ENCODE measurements at regions of chr9 and their contacts with region 1.

Region 1: DNA sequence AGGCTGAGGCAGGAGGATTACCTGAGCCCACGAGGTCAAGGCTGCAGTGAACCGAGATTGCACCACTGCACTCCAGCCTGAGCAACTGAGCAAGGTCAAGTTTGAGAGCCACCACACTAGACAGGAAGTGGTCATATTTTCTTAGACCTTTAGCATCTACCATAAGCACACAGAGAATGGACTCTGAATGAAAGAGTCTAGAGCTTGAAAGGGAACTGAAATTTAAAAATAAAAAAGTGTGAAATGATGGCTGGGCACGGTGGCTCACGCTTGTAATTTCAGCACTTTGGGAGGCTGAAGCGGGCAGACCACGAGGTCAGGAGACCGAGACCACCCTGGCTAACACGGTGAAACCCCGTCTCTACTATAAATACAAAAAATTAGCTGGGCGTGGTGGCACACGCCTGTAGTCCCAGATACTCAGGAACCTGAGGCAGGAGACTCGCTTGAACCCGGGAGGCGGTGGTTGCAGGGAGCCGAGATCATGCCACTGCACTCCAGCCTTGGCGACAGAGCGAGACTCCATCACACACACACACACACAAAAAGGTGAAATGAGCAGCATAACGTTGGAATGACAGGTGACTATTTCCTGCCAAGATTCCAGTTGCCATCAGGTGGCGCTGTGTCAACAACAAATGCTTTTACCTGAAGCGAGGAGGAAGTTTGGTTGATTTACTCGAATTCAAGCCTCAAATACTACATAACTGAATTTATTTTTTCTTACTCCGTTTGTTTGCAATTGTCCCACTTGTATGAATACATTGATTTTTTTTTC is 21.3 kb upstream of the AK3 start:
- DNase-seq: peak; percentile 90
- ATAC-seq: peak; percentile 86
- H3K4me3 Mint-ChIP-seq: peak overlapping the region; percentile 43
- H3K27ac Mint-ChIP-seq: peak overlapping the region; percentile 55
- H3K4me1 Mint-ChIP-seq: peaks cover 15% of the 10 kb centered on the region
- H3K27me3 Mint-ChIP-seq: peaks cover 7% of the 10 kb centered on the region

Region 2: DNA sequence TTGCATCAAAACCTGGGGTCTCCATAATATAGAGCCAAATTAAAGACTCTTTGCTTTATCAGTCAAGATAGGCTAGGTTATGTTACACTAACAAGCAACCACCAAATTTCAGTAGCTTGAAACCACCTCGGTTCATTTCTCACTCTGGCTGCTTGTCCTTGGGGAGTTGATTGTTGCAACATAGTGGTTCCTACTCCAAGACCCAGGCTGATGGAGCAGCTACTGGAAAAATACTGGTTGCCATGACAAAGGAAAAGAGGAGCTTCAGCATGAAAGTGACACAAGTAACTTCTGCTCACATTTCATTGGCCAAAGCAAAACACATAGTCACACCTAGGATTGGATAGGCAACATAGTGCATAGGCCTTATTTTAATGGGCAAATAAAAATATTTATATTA is 11.9 kb after region 1 on chr9:
- CTCF ChIA-PET with region 1: interaction called, 12 read pairs
- POLR2A ChIA-PET with region 1: no interaction called
- intact Hi-C with region 1: no loop called
- DNase-seq: no peak
- ATAC-seq: no peak
- H3K4me3 Mint-ChIP-seq: no peak overlapping the region
- H3K27ac Mint-ChIP-seq: no peak overlapping the region
- H3K4me1 Mint-ChIP-seq: peaks cover 3% of the 10 kb centered on the region
- H3K27me3 Mint-ChIP-seq: peaks cover 2% of the 10 kb centered on the region

Region 3: GRCh38 chr9:4832786-4833579 is 70.7 kb after region 1 on chr9:
- CTCF ChIA-PET with region 1: interaction called, 5 read pairs
- POLR2A ChIA-PET with region 1: no interaction called
- intact Hi-C with region 1: loop called in 1 of 2 experiments (anchors 2 kb)
- DNase-seq: peak; percentile 81
- ATAC-seq: peak; percentile 94
- H3K4me3 Mint-ChIP-seq: peak overlapping the region; percentile 16
- H3K27ac Mint-ChIP-seq: peak overlapping the region; percentile 84
- H3K4me1 Mint-ChIP-seq: peaks cover 45% of the 10 kb centered on the region
- H3K27me3 Mint-ChIP-seq: no peaks in the 10 kb centered on the region

Region 4: GRCh38 chr9:4904322-4905134 is 142.2 kb after region 1 on chr9:
- CTCF ChIA-PET with region 1: no interaction called
- POLR2A ChIA-PET with region 1: no interaction called
- intact Hi-C with region 1: no loop called
- DNase-seq: no peak
- ATAC-seq: no peak
- H3K4me3 Mint-ChIP-seq: no peak overlapping the region
- H3K27ac Mint-ChIP-seq: no peak overlapping the region
- H3K4me1 Mint-ChIP-seq: peaks cover 11% of the 10 kb centered on the region
- H3K27me3 Mint-ChIP-seq: no peaks in the 10 kb centered on the region

Region 5: DNA sequence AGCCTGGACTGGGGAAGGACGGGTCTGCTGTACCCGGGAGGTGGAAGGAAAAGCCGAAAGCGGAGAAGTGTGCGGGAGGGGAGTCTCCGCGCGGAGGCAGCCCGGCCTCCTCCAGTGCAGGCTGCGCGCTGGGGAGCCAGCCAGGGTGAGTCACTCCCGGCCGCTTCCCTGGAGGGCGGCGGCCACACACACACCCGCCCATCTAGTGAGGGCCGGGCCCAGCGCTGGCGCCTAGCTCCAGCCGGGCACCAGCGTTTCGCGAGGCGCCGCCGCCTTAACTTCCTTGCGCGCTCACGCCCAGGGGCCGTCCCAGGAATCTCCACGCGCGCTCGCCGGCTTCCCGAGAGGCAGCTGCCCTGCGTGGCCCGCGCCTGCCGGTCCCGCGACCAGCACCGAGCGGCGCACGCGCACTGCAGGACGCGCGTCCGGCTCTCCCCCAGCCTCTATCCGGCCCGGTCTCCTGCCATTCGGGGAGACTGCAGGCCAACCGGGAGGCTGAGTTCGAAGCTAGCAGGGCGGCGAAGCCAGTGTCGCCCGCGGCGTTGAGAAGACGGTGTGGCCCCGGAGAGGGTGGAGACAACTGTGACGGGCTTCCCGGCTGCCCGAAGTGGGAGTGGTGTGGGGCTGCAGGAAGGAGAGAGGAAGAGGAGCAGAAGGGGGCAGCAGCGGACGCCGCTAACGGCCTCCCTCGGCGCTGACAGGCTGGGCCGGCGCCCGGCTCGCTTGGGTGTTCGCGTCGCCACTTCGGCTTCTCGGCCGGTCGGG is 222.5 kb after region 1 on chr9 and contains the start of gene JAK2:
- CTCF ChIA-PET with region 1: interaction called, 95 read pairs
- POLR2A ChIA-PET with region 1: no interaction called
- intact Hi-C with region 1: loop called (anchors 1 kb)
- DNase-seq: peak; percentile 91
- ATAC-seq: peak; percentile 84
- H3K4me3 Mint-ChIP-seq: no peak within 1 kb of the TSS
- H3K27ac Mint-ChIP-seq: peak within 1 kb of the TSS; percentile 94
- H3K4me1 Mint-ChIP-seq: peaks cover 54% of the 10 kb centered on the region
- H3K27me3 Mint-ChIP-seq: no peaks in the 10 kb centered on the region
- total RNA-seq, gene JAK2: 19.4 to 19.5 TPM

Region 6: DNA sequence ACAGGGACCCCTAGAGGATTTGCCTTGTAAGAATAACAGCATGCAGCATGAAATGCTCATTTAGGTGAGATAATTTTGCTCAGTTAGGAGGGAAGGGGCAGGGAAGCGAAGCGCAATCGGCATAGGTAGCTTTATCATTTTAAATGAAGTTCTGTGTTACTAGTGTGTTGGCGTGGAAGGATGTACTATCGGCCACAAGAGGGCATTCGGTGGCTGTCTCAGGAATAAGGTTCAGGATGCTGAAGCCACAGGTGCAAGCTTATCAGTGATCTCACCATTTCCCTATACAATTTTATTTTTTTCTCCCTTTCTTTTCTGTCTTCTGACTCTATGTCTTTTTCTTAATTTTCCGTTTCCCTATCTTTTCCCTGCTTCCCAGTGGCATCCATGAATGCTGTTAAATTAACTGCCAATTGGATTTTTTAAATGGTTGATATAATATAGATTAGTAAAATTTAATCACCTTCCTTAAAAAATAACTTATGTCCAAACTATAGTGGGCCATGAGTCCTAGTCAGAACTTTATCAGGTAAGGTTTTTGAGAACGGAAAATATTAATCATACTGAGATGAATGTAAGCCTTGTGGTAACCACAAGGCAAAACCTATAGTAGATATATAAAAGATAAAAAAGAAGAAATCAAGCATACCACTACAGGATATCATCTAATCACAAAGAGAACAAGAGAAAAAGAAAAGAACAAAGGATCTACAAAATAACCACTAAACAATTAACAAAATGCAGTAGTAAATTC is 424.3 kb after region 1 on chr9:
- CTCF ChIA-PET with region 1: interaction called, 4 read pairs
- POLR2A ChIA-PET with region 1: no interaction called
- intact Hi-C with region 1: loop called (anchors 5 to 10 kb)
- DNase-seq: peak; percentile 75
- ATAC-seq: peak; percentile 84
- H3K4me3 Mint-ChIP-seq: no peak overlapping the region
- H3K27ac Mint-ChIP-seq: no peak overlapping the region
- H3K4me1 Mint-ChIP-seq: peaks cover 17% of the 10 kb centered on the region
- H3K27me3 Mint-ChIP-seq: no peaks in the 10 kb centered on the region

Region 7: DNA sequence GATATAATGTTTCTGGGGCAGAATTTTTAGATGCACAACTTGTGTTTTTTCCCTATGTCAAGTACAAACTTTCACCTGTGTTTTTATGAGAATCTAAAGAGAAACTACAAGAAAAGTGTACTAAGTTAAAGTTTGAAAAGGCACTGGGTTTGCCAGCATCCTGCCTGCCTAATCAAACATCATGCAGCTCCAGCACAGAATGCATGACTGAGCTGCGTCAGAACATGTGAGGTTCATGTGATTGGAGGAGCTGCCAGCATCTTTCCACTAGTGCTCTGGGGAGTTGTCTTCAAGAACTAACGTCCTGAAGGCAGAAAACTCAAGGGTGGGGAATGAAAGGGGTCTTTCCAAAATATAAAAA is 820.5 kb after region 1 on chr9:
- CTCF ChIA-PET with region 1: interaction called, 12 read pairs
- POLR2A ChIA-PET with region 1: no interaction called
- intact Hi-C with region 1: no loop called
- DNase-seq: peak; percentile 69
- ATAC-seq: peak; percentile 42
- H3K4me3 Mint-ChIP-seq: no peak overlapping the region
- H3K27ac Mint-ChIP-seq: peak overlapping the region; percentile 85
- H3K4me1 Mint-ChIP-seq: peaks cover 74% of the 10 kb centered on the region
- H3K27me3 Mint-ChIP-seq: no peaks in the 10 kb centered on the region

Measured in activated CD4-positive, alpha-beta T cell treated with anti-CD3 and anti-CD28 coated beads for 36 hours (primary cell).